IMR-90 (cell line): ENCODE measurements at regions of chr9 and their contacts with region 1.

Region 1: GRCh38 chr9:806285-807156 is 35.0 kb upstream of the DMRT1 start:
- DNase-seq: peak; percentile 51
- ATAC-seq: peak; percentile 37; the same call in 1 of the 2 replicates
- H3K4me3 ChIP-seq: no peak overlapping the region
- H3K27ac ChIP-seq: no peak overlapping the region
- H3K4me1 ChIP-seq: peaks cover 8% of the 10 kb centered on the region
- H3K27me3 ChIP-seq: no peaks in the 10 kb centered on the region
- CTCF ChIP-seq: peak; percentile 92
- POLR2A ChIP-seq: no peak
- RAD21 ChIP-seq: peak; percentile 88

Region 2: DNA sequence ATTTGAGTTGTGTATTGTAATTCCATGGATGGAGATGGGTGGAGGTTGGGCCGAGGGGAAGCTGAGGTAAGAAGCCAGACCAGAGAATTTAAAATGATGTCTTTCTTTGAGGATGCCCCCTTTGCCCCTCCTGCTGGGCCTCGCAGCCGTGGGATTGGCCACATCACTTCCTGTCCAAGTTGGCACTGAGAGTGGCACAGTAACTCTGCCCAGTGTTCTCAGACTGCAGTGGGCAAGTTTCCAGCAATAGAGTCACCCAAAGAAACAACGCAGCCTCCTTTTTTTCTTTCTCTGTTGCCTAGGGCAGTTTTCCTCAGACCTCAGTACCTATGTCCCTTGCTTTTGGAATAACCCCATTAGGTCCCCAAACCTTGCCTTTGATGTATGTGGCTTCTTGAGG is 271.6 kb before region 1 on chr9:
- CTCF ChIA-PET with region 1: no interaction called
- POLR2A ChIA-PET with region 1: no interaction called
- dilution Hi-C with region 1: no loop called
- in situ Hi-C with region 1: no loop called
- intact Hi-C with region 1: no loop called
- DNase-seq: no peak
- ATAC-seq: no peak
- H3K4me3 ChIP-seq: no peak overlapping the region
- H3K27ac ChIP-seq: no peak overlapping the region
- H3K4me1 ChIP-seq: no peaks in the 10 kb centered on the region
- H3K27me3 ChIP-seq: no peaks in the 10 kb centered on the region; the same call in 1 of the 2 replicates
- CTCF ChIP-seq: no peak
- POLR2A ChIP-seq: no peak
- RAD21 ChIP-seq: no peak

Region 3: DNA sequence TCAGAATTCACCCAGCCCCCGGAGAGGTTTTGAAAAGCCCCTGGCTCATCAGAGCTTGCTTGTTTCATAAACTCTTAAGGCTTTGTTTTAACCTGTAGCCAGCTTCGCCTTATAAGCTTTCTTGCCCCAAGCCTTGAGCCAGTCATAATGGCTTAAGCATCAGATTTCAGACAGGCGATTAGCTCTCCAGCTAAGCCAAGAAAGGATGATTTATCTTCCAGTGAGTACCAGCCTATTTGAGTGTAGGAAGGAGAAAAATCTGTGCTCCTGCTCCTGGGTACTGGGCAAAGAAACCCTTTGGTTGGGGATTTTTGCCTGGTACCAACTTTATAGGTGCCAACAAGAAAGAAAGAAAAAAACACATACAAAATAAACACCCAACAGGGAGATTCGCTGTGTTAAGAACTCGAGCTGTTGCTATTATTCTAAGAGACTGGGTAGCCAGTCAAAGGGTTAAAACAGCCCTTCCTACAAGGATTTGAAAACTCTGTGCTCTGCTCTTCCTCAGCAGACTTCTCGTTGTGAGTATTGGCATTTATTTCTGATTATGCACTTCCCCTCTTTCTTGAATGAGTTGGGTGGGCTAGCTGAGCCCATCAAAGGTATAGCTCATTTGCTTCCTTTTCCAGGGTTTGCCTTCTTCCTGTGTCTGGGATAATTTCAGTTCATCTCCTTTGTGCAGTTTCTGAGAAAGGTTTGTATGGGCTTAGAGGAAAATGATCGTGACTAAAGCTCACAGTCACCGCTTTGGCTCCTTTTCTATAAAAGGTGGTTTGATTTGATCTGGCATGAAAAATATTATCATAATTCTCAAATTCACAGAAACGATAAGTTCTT is 122.2 kb before region 1 on chr9:
- CTCF ChIA-PET with region 1: no interaction called
- POLR2A ChIA-PET with region 1: no interaction called
- dilution Hi-C with region 1: no loop called
- in situ Hi-C with region 1: no loop called
- intact Hi-C with region 1: loop called (anchors 1 kb)
- DNase-seq: peak; percentile 81
- ATAC-seq: peak; percentile 65
- H3K4me3 ChIP-seq: peak overlapping the region; percentile 38; the same call in 1 of the 2 replicates
- H3K27ac ChIP-seq: peak overlapping the region; percentile 76
- H3K4me1 ChIP-seq: peaks cover 17% of the 10 kb centered on the region
- H3K27me3 ChIP-seq: no peaks in the 10 kb centered on the region
- CTCF ChIP-seq: no peak
- POLR2A ChIP-seq: no peak
- RAD21 ChIP-seq: no peak

Region 4: DNA sequence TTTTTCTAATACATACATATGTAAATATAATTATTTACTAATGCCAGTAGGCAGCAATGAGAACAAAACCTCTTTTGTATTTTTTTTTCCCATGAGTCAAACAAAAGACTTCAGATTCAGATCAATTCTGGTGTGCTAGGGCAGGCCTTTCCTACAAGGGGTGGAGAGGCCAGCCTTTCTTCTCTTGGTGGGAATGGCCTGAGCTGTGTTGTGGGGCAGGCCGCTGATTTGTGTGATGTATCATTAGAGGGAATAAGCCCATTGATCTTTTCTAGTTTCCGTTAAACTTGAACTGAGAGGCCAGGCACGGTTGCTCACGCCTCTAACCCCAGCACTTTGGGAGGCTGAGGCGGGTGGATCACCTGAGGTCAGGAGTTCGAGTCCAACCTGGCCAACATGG is 80.5 kb before region 1 on chr9:
- CTCF ChIA-PET with region 1: no interaction called
- POLR2A ChIA-PET with region 1: no interaction called
- dilution Hi-C with region 1: no loop called
- in situ Hi-C with region 1: no loop called
- intact Hi-C with region 1: no loop called
- DNase-seq: no peak
- ATAC-seq: no peak
- H3K4me3 ChIP-seq: no peak overlapping the region
- H3K27ac ChIP-seq: no peak overlapping the region
- H3K4me1 ChIP-seq: no peaks in the 10 kb centered on the region
- H3K27me3 ChIP-seq: no peaks in the 10 kb centered on the region
- CTCF ChIP-seq: no peak
- POLR2A ChIP-seq: no peak
- RAD21 ChIP-seq: no peak

Region 5: DNA sequence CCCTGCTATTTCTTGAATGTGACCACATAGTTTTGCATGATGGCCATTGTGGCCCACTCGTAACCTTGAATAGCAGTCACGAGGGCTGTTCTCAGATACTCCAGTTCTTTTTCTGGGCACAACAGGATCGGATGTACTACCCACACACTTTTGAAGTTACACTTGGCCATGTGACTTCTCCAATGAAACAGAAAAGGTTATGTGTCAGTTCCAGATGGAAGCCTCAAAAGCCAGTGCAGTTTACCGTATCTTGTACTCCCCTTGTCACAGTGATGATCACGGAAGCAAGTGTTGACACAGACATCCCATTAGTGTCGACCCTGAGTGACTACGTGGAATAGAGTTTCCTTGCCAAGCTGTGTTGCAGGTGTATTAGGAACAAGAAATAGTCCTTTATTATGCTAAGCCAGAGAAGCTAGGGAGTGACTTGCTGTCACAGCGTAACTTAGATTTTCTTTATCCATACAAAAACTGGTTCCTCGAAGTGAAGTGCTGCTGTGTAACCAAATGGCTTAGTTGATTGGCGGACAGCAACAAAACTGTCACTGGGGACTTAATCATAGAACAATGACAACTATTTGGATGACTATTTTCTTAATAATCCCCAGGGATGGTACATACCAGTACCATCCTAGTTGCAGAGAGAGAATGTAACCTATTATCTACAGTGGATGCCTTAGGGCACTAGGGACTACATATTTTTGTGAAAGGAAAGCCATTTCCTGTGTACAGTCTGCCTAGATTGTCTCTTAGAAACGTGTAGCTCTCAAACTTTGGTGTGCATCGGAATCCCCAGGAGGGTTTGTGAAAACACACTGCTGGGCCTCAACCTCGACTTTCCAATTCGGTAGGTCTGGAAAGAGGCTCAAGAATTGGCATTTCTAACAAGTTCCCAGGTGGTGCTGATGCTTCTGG is 55.1 kb before region 1 on chr9:
- CTCF ChIA-PET with region 1: interaction called, 3 read pairs
- POLR2A ChIA-PET with region 1: interaction called, 10 read pairs
- dilution Hi-C with region 1: no loop called
- in situ Hi-C with region 1: no loop called
- intact Hi-C with region 1: loop called (anchors 2 kb)
- DNase-seq: peak; percentile 15
- ATAC-seq: peak; percentile 40
- H3K4me3 ChIP-seq: no peak overlapping the region
- H3K27ac ChIP-seq: peak overlapping the region; percentile 87
- H3K4me1 ChIP-seq: peaks cover 20% of the 10 kb centered on the region
- H3K27me3 ChIP-seq: no peaks in the 10 kb centered on the region
- CTCF ChIP-seq: no peak
- POLR2A ChIP-seq: no peak
- RAD21 ChIP-seq: no peak

Region 6: DNA sequence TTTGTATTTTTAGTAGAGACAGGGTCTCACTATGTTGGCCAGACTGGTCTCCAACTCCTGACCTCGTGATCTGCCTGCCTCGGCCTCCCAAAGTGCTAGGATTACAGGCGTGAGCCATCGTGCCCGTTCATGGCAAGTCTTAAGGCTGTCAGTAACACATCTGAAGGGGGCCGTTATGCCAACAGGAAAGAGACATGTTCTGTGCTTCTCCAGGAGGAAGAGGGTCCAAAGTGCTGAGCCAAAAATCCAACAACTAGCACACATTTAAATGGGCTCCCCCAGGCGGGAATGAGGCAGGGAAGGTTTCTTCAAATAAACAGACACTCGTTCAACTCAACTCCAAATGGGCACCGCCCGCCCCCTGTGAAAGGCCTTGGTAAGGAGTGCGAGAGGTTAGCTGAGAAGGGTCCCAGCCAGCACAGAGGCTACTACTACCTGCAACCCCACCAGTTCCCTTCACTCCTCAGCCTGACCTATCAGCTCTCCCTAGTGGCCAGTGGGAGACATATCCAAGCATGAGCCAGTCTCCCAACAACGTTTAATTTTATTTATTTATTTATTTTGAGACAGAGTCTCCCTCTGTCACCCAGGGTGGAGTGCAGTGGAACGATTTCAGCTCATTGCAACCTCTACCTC is 49.2 kb before region 1 on chr9:
- CTCF ChIA-PET with region 1: interaction called, 3 read pairs
- POLR2A ChIA-PET with region 1: no interaction called
- dilution Hi-C with region 1: no loop called
- in situ Hi-C with region 1: no loop called
- intact Hi-C with region 1: loop called (anchors 2 kb)
- DNase-seq: peak; percentile 67
- ATAC-seq: peak; percentile 84
- H3K4me3 ChIP-seq: no peak overlapping the region
- H3K27ac ChIP-seq: no peak overlapping the region
- H3K4me1 ChIP-seq: peaks cover 9% of the 10 kb centered on the region
- H3K27me3 ChIP-seq: no peaks in the 10 kb centered on the region
- CTCF ChIP-seq: peak; percentile 64
- POLR2A ChIP-seq: no peak
- RAD21 ChIP-seq: peak; percentile 79